ENCODE measurements at regions of chr17 and their contacts with region 1.

Region 1: GRCh38 chr17:10115071-10115539 is 83.3 kb downstream of the GAS7 start:
- DNase-seq: peak; percentile 69
- ATAC-seq: peak; percentile 82
- H3K4me3 ChIP-seq: peak overlapping the region; percentile 1 to 56 (median 24)
- H3K4me3 Mint-ChIP-seq: peak overlapping the region; percentile 58
- H3K27ac ChIP-seq: peak overlapping the region; percentile 75 to 82
- H3K27ac Mint-ChIP-seq: peak overlapping the region; percentile 91
- H3K4me1 ChIP-seq: peaks cover 55 to 59% of the 10 kb centered on the region in 2 donors
- H3K4me1 Mint-ChIP-seq: peaks cover 67% of the 10 kb centered on the region
- H3K27me3 ChIP-seq: no peaks in the 10 kb centered on the region
- H3K27me3 Mint-ChIP-seq: no peaks in the 10 kb centered on the region
- CTCF ChIP-seq: no peak

Region 2: GRCh38 chr17:9971991-9972599 is 143.0 kb before region 1 on chr17:
- CTCF ChIA-PET with region 1: interaction called, 10 read pairs
- POLR2A ChIA-PET with region 1: no interaction called
- intact Hi-C with region 1: no loop called
- DNase-seq: no peak
- ATAC-seq: no peak
- H3K4me3 ChIP-seq: no peak overlapping the region
- H3K4me3 Mint-ChIP-seq: no peak overlapping the region
- H3K27ac ChIP-seq: no peak overlapping the region
- H3K27ac Mint-ChIP-seq: no peak overlapping the region
- H3K4me1 ChIP-seq: no peaks in the 10 kb centered on the region
- H3K4me1 Mint-ChIP-seq: no peaks in the 10 kb centered on the region
- H3K27me3 ChIP-seq: no peaks in the 10 kb centered on the region
- H3K27me3 Mint-ChIP-seq: no peaks in the 10 kb centered on the region
- CTCF ChIP-seq: no peak

Region 3: GRCh38 chr17:10059369-10060211 is 55.5 kb before region 1 on chr17:
- CTCF ChIA-PET with region 1: interaction called, 3 read pairs
- POLR2A ChIA-PET with region 1: no interaction called
- intact Hi-C with region 1: loop called (anchors 2 kb)
- DNase-seq: peak; percentile 64
- ATAC-seq: peak; percentile 39
- H3K4me3 ChIP-seq: no peak overlapping the region
- H3K4me3 Mint-ChIP-seq: peak overlapping the region; percentile 55
- H3K27ac ChIP-seq: peak overlapping the region in 1 of 2 donors; percentile 32
- H3K27ac Mint-ChIP-seq: peak overlapping the region; percentile 42
- H3K4me1 ChIP-seq: peaks cover 31 to 40% of the 10 kb centered on the region in 2 donors
- H3K4me1 Mint-ChIP-seq: peaks cover 55% of the 10 kb centered on the region
- H3K27me3 ChIP-seq: no peaks in the 10 kb centered on the region
- H3K27me3 Mint-ChIP-seq: peaks cover 2% of the 10 kb centered on the region
- CTCF ChIP-seq: no peak

Region 4: DNA sequence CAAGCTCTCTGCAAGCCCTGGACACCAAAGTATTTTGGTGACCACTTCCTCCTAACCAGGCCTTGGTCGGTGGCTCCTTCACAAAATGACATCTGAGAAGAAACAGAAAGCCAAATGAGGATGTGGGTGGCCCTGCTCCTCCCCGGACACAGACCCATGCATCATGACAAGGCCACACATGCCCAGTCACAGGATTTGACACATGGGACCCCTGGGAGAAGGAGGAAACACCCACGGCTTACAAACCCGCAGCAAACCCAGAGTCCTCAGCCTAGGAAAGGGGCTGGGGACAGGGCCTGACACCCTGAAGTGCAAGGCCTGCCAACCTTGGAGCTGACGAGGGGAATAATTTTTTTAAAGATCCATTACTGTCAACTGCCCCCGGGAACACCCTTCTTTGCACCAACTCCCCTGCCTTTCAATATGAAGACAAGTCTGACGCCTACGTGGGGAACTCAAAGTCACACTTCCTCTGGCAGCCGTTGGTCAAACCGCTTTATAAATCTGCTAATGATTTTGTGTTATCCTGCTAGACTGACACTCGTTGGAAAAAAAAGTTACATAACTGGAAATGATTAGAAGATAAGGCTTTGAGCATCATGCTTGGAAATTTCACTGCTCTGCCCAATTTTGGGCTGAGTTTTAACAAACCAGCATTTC is 42.0 kb after region 1 on chr17:
- CTCF ChIA-PET with region 1: interaction called, 6 read pairs
- POLR2A ChIA-PET with region 1: interaction called, 4 read pairs
- intact Hi-C with region 1: loop called (anchors 2 kb)
- DNase-seq: peak; percentile 83
- ATAC-seq: peak; percentile 79
- H3K4me3 ChIP-seq: peak overlapping the region in 1 of 5 experiments; percentile 25
- H3K4me3 Mint-ChIP-seq: peak overlapping the region; percentile 80
- H3K27ac ChIP-seq: peak overlapping the region; percentile 82 to 88
- H3K27ac Mint-ChIP-seq: peak overlapping the region; percentile 98
- H3K4me1 ChIP-seq: peaks cover 25 to 31% of the 10 kb centered on the region in 2 donors
- H3K4me1 Mint-ChIP-seq: peaks cover 30% of the 10 kb centered on the region
- H3K27me3 ChIP-seq: no peaks in the 10 kb centered on the region
- H3K27me3 Mint-ChIP-seq: no peaks in the 10 kb centered on the region
- CTCF ChIP-seq: no peak

Region 5: DNA sequence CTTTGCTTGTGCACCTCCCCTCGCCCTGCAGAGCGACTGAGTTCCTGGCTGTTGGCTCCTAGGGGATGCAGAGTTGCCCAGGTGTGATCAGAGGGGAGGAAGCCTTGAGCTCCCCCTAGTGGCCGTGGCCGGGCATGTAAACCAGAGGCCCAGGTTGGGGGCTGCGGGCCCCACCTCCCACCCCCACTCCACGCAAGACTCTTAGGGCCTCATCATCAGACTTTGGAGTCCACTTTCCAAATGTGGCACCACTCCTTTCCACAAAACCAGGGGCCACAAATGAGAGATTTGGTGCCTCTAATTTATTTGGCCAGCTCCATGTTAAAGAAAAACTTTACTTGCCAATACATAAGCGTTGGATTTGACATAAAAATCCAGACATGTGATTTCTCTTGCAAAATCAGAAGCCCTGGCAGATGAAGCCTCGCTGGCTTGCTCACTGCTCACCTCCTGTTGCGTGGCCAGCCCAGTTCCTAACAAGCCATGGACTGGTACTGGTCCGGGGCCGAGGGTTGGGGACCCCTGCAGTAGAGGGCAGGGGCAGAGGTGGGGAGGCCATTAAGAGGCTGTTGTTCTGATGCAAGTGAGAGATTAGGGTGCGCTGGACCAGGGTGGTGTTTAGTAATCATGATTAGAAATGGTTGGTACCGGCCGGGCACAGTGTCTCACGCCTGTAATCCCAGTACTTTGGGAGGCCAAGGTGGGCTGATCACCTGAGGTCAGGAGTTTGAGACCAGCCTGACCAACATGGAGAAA is 112.0 kb after region 1 on chr17:
- CTCF ChIA-PET with region 1: interaction called, 36 read pairs
- POLR2A ChIA-PET with region 1: no interaction called
- intact Hi-C with region 1: loop called (anchors 1 kb)
- DNase-seq: peak; percentile 67
- ATAC-seq: peak; percentile 82
- H3K4me3 ChIP-seq: no peak overlapping the region
- H3K4me3 Mint-ChIP-seq: no peak overlapping the region
- H3K27ac ChIP-seq: no peak overlapping the region
- H3K27ac Mint-ChIP-seq: no peak overlapping the region
- H3K4me1 ChIP-seq: no peaks in the 10 kb centered on the region
- H3K4me1 Mint-ChIP-seq: peaks cover 2% of the 10 kb centered on the region
- H3K27me3 ChIP-seq: no peaks in the 10 kb centered on the region
- H3K27me3 Mint-ChIP-seq: no peaks in the 10 kb centered on the region
- CTCF ChIP-seq: peak; percentile 87

Region 6: DNA sequence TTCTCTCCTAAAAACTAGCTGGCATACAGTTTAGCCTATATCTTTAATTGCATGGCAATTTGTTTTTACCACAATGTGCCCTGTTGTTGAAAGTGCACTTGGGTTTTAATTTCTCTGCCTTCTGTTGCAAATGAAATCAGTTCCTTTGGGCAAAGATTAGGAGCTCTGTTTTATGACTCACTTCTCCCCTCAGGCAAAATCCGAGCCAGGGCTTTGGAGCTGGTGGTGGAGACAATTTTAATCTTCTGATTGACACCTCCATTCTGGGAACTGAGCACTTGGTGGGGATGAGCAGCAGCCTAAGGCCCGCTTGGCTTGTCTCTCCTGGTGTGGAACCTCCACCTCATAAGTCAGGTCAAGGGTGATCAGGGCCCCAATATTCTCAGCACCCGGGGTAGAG is 320.0 kb after region 1 on chr17:
- CTCF ChIA-PET with region 1: no interaction called
- POLR2A ChIA-PET with region 1: no interaction called
- intact Hi-C with region 1: no loop called
- DNase-seq: no peak
- ATAC-seq: no peak
- H3K4me3 ChIP-seq: no peak overlapping the region
- H3K4me3 Mint-ChIP-seq: no peak overlapping the region
- H3K27ac ChIP-seq: no peak overlapping the region
- H3K27ac Mint-ChIP-seq: no peak overlapping the region
- H3K4me1 ChIP-seq: no peaks in the 10 kb centered on the region
- H3K4me1 Mint-ChIP-seq: no peaks in the 10 kb centered on the region
- H3K27me3 ChIP-seq: peaks cover 0 to 7% (median 2%) of the 10 kb centered on the region in 4 experiments
- H3K27me3 Mint-ChIP-seq: peaks cover 31% of the 10 kb centered on the region
- CTCF ChIP-seq: no peak

Measured in B cell (primary cell).